SK-N-SH (cell line): ENCODE measurements at regions of chr17 and their contacts with region 1.

Region 1: GRCh38 chr17:7632492-7632894 is 2.6 kb downstream of the SHBG start:
- DNase-seq: no peak
- H3K4me3 ChIP-seq: no peak overlapping the region; a peak in 1 of 4 replicates
- H3K27ac ChIP-seq: no peak overlapping the region
- H3K4me1 ChIP-seq: peaks cover 0 to 12% of the 10 kb centered on the region in 2 experiments; a peak in 1 of 4 replicates
- H3K27me3 ChIP-seq: no peaks in the 10 kb centered on the region
- CTCF ChIP-seq: peak; percentile 51
- EP300 ChIP-seq: no peak
- RAD21 ChIP-seq: peak; percentile 43

Region 2: GRCh38 chr17:7351665-7352501 is 280.6 kb before region 1 on chr17 and contains the start of gene KCTD11:
- CTCF ChIA-PET with region 1: no interaction called
- POLR2A ChIA-PET with region 1: no interaction called
- DNase-seq: peak; percentile 89
- H3K4me3 ChIP-seq: peak within 1 kb of the TSS; percentile 69 to 97
- H3K27ac ChIP-seq: peak within 1 kb of the TSS; percentile 88 to 99
- H3K4me1 ChIP-seq: peaks cover 19 to 48% of the 10 kb centered on the region in 2 experiments; a peak in 2 of 4 replicates
- H3K27me3 ChIP-seq: no peaks in the 10 kb centered on the region
- CTCF ChIP-seq: no peak
- EP300 ChIP-seq: peak in 1 of 2 experiments; percentile 14; a peak in 1 of 4 replicates
- RAD21 ChIP-seq: no peak
- polyA plus RNA-seq, gene KCTD11: 9.5 and 12.1 TPM in 2 replicates

Region 3: GRCh38 chr17:7650509-7651096 is 18.1 kb after region 1 on chr17 and contains the start of gene ATP1B2:
- CTCF ChIA-PET with region 1: interaction called, 55 read pairs
- POLR2A ChIA-PET with region 1: interaction called, 14 read pairs
- DNase-seq: peak; percentile 95
- H3K4me3 ChIP-seq: peak within 1 kb of the TSS; percentile 47 to 50
- H3K27ac ChIP-seq: no peak within 1 kb of the TSS
- H3K4me1 ChIP-seq: peaks cover 0 to 7% of the 10 kb centered on the region in 2 experiments; a peak in 1 of 4 replicates
- H3K27me3 ChIP-seq: peaks cover 25% of the 10 kb centered on the region
- CTCF ChIP-seq: no peak
- EP300 ChIP-seq: no peak
- RAD21 ChIP-seq: no peak
- polyA plus RNA-seq, gene ATP1B2: 0.05 and 0.08 TPM in 2 replicates

Region 4: DNA sequence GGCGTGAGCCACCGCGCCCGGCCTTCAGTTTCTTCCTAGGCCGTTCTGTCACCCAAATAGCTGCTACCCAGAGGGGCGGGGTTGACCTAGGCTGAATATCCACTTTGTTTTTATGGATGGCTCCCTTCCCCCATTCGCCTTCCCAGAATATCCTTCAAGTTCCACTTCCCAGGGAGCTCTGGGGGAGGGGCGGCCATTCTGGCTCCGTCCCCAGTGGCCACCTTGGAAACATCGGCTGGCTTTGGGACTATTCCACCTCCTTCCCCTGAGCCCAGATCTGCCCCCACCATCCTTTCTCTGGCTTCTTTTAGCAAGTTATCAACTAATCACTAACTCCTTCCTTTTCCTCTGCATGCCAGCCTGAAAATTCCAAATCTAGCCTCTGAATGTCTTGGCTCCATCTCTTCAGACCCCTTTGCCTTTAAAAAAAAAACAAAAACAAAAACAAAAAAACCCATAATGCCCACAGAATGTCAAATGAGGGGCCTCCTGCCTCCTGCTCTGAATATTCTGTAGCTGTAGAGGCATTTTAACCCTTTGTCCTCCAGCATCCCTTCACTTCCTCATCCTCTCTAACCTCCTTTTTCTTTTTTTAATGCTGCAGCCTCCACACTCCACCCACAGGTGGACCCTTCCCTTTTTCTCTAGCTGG is 24.6 kb after region 1 on chr17:
- CTCF ChIA-PET with region 1: interaction called, 55 read pairs
- POLR2A ChIA-PET with region 1: interaction called, 3 read pairs
- DNase-seq: peak; percentile 20
- H3K4me3 ChIP-seq: no peak overlapping the region
- H3K27ac ChIP-seq: no peak overlapping the region
- H3K4me1 ChIP-seq: no peaks in the 10 kb centered on the region
- H3K27me3 ChIP-seq: peaks cover 7% of the 10 kb centered on the region
- CTCF ChIP-seq: no peak
- EP300 ChIP-seq: no peak
- RAD21 ChIP-seq: no peak

Region 5: GRCh38 chr17:7673239-7673638 is 40.7 kb after region 1 on chr17:
- CTCF ChIA-PET with region 1: interaction called, 13 read pairs
- POLR2A ChIA-PET with region 1: no interaction called
- DNase-seq: no peak
- H3K4me3 ChIP-seq: no peak overlapping the region; a peak in 1 of 4 replicates
- H3K27ac ChIP-seq: no peak overlapping the region
- H3K4me1 ChIP-seq: no peaks in the 10 kb centered on the region
- H3K27me3 ChIP-seq: no peaks in the 10 kb centered on the region
- CTCF ChIP-seq: peak; percentile 56
- EP300 ChIP-seq: no peak
- RAD21 ChIP-seq: peak; percentile 29; the same call in 1 of the 2 replicates